Ovary (tissue), 10 donors: ENCODE measurements at regions of chr11 and their contacts with region 1.

Region 1: DNA sequence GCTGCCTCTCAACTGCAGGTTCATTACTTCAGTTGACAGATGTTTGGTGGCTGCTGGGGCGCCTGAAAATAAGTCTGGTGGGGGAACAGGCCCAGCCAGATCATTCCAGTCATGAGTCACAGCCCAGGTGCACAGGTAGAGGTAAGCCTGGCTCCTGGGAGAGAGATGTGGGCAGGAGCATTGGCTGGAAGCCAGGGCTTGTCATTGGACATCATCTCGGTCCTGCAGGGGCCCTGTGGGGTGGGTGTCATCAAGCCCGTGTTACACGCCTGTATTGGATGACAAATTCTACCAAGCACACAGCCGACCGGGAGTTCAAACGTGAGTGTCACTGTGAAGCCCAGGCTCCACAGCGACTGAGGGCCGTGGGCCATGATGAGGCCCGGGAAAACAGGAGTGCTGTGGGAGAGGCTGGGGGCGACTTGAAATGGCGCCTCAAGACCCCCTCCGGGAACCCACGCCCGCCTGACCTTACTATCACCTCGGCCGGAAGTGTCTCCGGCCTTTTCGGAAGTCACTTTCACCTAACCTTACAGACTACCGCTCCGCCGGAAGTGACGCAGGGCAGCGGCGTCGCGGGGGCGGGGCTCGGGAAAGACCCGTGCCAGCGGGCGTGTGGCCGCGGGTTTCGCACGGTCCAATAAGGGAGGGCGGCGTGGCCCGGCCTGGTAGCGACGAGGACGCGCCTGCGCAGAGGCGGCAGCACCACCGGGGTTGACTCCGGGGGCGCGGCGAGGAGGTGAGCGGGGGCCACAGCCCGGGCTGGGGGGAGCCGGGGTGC is at the start of gene FKBP2:
- DNase-seq: peak; percentile 97 to 99 (median 98)
- H3K4me3 ChIP-seq: peak within 1 kb of the TSS; percentile 96
- H3K27ac ChIP-seq: peak within 1 kb of the TSS; percentile 89 to 99
- H3K4me1 ChIP-seq: peaks cover 8% of the 10 kb centered on the region
- H3K27me3 ChIP-seq: no peaks in the 10 kb centered on the region
- CTCF ChIP-seq: peak in 1 of 3 donors; percentile 24
- EP300 ChIP-seq: peak; percentile 91
- POLR2A ChIP-seq: peak; percentile 82
- total RNA-seq, gene FKBP2: 41.4 to 88.0 (median 49.5) TPM

Region 2: GRCh38 chr11:63974259-63975143 is 266.1 kb before region 1 on chr11 and contains the start of gene COX8A:
- intact Hi-C with region 1: no loop called
- DNase-seq: peak; percentile 96 to 99 (median 97)
- H3K4me3 ChIP-seq: peak within 1 kb of the TSS; percentile 83
- H3K27ac ChIP-seq: peak within 1 kb of the TSS; percentile 73 to 95
- H3K4me1 ChIP-seq: peaks cover 15% of the 10 kb centered on the region
- H3K27me3 ChIP-seq: no peaks in the 10 kb centered on the region
- CTCF ChIP-seq: no peak
- EP300 ChIP-seq: no peak
- POLR2A ChIP-seq: peak; percentile 79
- total RNA-seq, gene COX8A: 197 to 339 (median 222) TPM

Region 3: DNA sequence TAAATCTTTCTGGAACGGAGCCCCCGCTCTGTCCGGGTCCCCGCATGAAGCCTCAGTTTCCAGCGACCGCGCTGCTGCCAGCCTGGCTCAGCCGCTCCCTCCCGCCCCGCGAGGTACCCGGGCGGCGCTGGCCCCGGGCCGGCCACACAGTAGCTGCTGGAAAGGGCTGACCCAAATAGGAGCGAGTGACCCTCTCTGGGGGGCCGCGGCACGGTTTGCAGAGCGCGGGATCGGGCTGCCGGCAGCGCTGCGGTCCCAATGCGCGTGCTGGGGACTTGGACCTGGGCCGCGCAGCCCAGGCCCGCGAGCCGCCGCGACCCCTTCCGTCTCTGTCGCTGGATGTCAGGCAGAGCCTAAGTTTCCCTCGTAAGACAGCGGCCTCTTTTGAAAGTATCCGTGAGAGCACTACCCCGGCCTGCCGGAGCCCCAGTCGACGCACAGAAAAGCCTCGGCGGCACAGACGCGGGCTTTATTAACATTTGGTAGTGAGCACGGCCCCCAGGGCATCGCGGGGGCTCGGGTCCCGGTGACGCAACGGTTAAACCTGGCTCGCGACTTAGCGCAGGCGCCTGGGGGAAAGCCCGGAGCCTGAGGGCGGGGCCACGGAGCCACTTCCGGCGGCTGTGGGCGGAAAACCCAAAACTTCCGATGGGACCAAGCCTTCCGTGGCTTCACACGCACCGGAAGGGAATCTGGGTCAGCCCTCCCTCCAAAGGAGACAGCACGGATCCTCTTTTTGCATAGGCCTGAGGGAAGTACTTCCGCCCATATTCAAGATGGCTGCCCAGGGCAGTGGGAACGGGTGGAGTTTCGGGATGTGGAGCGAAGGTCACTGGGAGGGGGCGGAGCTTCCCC is 29.0 kb after region 1 on chr11:
- intact Hi-C with region 1: loop called in 1 of 4 experiments (anchors 1 kb)
- DNase-seq: peak; percentile 97 to 99 (median 98)
- H3K4me3 ChIP-seq: peak overlapping the region; percentile 79
- H3K27ac ChIP-seq: peak overlapping the region; percentile 69 to 90
- H3K4me1 ChIP-seq: peaks cover 9% of the 10 kb centered on the region
- H3K27me3 ChIP-seq: no peaks in the 10 kb centered on the region
- CTCF ChIP-seq: peak in 1 of 3 donors; percentile 29
- EP300 ChIP-seq: peak; percentile 54
- POLR2A ChIP-seq: peak; percentile 15

Region 4: GRCh38 chr11:64304316-64305072 is 63.9 kb after region 1 on chr11:
- intact Hi-C with region 1: loop called in 1 of 4 experiments (anchors 5 kb)
- DNase-seq: peak; percentile 79 to 90 (median 88)
- H3K4me3 ChIP-seq: peak overlapping the region; percentile 48
- H3K27ac ChIP-seq: peak overlapping the region in 1 of 2 donors; percentile 55
- H3K4me1 ChIP-seq: peaks cover 13% of the 10 kb centered on the region
- H3K27me3 ChIP-seq: peaks cover 8% of the 10 kb centered on the region
- CTCF ChIP-seq: peak; percentile 74 to 87 (median 81)
- EP300 ChIP-seq: no peak
- POLR2A ChIP-seq: peak; percentile 5